Activated CD8-positive, alpha-beta T cell treated with anti-CD3 and anti-CD28 coated beads, Interleukin-2, amount 10 ng/mL, durations not matched to agents 7 days and 5 days (primary cell): ENCODE measurements at regions of chr1 and their contacts with region 1.

Region 1: GRCh38 chr1:100351095-100351891 is 1.0 kb upstream of the CDC14A start:
- DNase-seq: peak; percentile 90
- ATAC-seq: peak; percentile 78
- H3K4me3 Mint-ChIP-seq: peak overlapping the region; percentile 96
- H3K27ac Mint-ChIP-seq: peak overlapping the region; percentile 99
- H3K4me1 Mint-ChIP-seq: peaks cover 31% of the 10 kb centered on the region
- H3K27me3 Mint-ChIP-seq: no peaks in the 10 kb centered on the region

Region 2: DNA sequence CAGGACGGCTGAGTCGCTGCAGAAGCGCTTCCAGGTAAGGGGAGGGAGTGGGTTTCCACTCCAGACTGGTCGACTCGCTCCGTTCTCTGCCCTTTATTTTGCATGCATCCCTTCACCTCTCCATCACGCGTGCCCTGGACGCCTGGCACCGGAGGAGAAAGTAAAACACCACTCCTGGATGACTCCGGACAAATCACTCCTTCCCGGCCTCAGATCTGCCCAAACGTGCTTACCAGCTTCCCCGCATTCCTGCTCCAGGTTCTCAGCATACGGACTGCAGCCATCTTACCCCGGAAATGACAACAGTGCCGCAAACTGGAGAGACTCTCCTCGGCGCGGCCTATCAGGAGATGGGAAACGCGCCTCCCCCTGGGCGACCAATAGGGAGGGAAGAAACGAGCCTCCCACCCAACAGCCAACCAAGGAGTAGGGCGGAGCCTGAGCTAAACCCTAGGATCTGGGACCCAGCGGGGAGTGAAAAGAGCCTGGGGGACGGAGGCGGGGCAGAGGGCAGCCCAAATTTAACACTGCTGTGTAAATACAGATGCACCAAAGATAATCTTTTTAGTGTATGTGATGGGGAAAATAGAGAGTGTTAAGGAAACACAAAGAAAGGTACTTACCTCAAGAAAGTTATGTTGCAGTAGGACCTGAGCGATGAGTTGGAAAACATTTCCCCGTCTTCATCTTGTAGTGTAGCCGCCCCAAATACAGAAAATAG is 101.6 kb before region 1 on chr1 and contains the start of gene DBT:
- CTCF ChIA-PET with region 1: no interaction called
- POLR2A ChIA-PET with region 1: interaction called, 13 read pairs
- DNase-seq: peak; percentile 96
- ATAC-seq: peak; percentile 100
- H3K4me3 Mint-ChIP-seq: no peak within 1 kb of the TSS
- H3K27ac Mint-ChIP-seq: no peak within 1 kb of the TSS
- H3K4me1 Mint-ChIP-seq: peaks cover 6% of the 10 kb centered on the region
- H3K27me3 Mint-ChIP-seq: peaks cover 6% of the 10 kb centered on the region
- total RNA-seq, gene DBT: 10.0 to 11.2 TPM

Region 3: GRCh38 chr1:100322436-100323211 is 28.7 kb before region 1 on chr1:
- CTCF ChIA-PET with region 1: no interaction called
- POLR2A ChIA-PET with region 1: no interaction called
- DNase-seq: no peak
- ATAC-seq: no peak
- H3K4me3 Mint-ChIP-seq: no peak overlapping the region
- H3K27ac Mint-ChIP-seq: no peak overlapping the region
- H3K4me1 Mint-ChIP-seq: peaks cover 2% of the 10 kb centered on the region
- H3K27me3 Mint-ChIP-seq: no peaks in the 10 kb centered on the region

Region 4: GRCh38 chr1:100387209-100387608 is 35.9 kb after region 1 on chr1:
- CTCF ChIA-PET with region 1: interaction called, 8 read pairs
- POLR2A ChIA-PET with region 1: interaction called, 15 read pairs
- DNase-seq: no peak
- ATAC-seq: no peak
- H3K4me3 Mint-ChIP-seq: peak overlapping the region; percentile 66
- H3K27ac Mint-ChIP-seq: peak overlapping the region; percentile 78
- H3K4me1 Mint-ChIP-seq: peaks cover 68% of the 10 kb centered on the region
- H3K27me3 Mint-ChIP-seq: no peaks in the 10 kb centered on the region

Region 5: GRCh38 chr1:100423832-100424337 is 72.6 kb after region 1 on chr1:
- CTCF ChIA-PET with region 1: interaction called, 7 read pairs
- POLR2A ChIA-PET with region 1: interaction called, 11 read pairs
- DNase-seq: no peak
- ATAC-seq: peak; percentile 36
- H3K4me3 Mint-ChIP-seq: no peak overlapping the region
- H3K27ac Mint-ChIP-seq: no peak overlapping the region
- H3K4me1 Mint-ChIP-seq: peaks cover 36% of the 10 kb centered on the region
- H3K27me3 Mint-ChIP-seq: no peaks in the 10 kb centered on the region

Region 6: GRCh38 chr1:100452641-100453040 is 101.3 kb after region 1 on chr1:
- CTCF ChIA-PET with region 1: interaction called, 46 read pairs
- POLR2A ChIA-PET with region 1: interaction called, 16 read pairs
- DNase-seq: no peak
- ATAC-seq: peak; percentile 87
- H3K4me3 Mint-ChIP-seq: no peak overlapping the region
- H3K27ac Mint-ChIP-seq: peak overlapping the region; percentile 60
- H3K4me1 Mint-ChIP-seq: peaks cover 72% of the 10 kb centered on the region
- H3K27me3 Mint-ChIP-seq: no peaks in the 10 kb centered on the region

Region 7: DNA sequence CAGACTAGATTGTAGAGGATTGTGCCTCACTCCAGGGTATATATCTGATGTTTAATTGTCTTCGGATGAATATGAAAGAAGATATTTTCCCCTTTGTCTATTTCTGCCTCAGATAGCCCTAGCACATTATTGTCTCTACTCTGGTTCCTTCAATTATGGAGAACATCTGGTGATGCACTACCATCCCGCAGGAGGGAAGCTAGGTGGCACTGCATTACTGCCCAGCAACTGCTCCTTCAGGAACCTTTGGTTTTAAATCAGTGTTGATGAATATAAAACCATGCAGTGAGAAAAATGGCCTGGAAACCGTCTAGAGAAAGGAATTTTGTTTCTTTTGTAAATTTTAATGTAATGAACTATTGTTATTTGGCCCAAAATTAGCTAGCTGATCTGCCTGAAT is 255.1 kb after region 1 on chr1:
- CTCF ChIA-PET with region 1: no interaction called
- POLR2A ChIA-PET with region 1: no interaction called
- DNase-seq: no peak
- ATAC-seq: no peak
- H3K4me3 Mint-ChIP-seq: no peak overlapping the region
- H3K27ac Mint-ChIP-seq: no peak overlapping the region
- H3K4me1 Mint-ChIP-seq: no peaks in the 10 kb centered on the region
- H3K27me3 Mint-ChIP-seq: peaks cover 25% of the 10 kb centered on the region